ENCODE measurements at regions of chr1 and their contacts with region 1.

Region 1: DNA sequence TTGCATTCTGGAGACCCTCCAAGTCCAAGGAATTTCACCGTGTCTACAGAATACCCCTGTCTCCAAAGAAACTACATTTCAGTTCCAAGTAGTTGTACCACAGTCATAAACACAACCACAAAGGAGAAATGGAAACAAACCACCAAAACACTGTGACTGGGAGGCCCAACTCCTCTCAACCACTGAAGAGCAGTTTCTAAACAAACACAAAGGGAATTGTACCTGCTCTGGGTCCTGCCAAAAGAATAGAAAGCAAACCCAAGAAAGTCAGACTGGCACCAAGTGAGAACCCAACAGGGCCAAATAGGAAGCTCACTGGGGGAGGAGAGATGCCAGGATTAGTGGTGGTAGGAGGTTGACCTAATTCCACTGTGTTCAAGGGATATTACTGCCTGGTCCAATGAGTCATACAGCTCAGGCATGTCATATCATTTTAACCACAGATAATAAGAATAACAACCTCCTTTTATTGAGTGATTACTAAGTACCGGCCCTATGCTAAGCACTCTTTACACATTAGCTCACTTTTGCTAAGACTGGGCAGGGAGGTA is 123.9 kb upstream of the PPP2R5A start:
- DNase-seq: no peak
- ATAC-seq: peak; percentile 85 to 94 (median 86)
- H3K4me3 ChIP-seq: no peak overlapping the region
- H3K27ac ChIP-seq: peak overlapping the region; percentile 80
- H3K4me1 ChIP-seq: peaks cover 28% of the 10 kb centered on the region
- H3K27me3 ChIP-seq: no peaks in the 10 kb centered on the region
- CTCF ChIP-seq: no peak

Region 2: GRCh38 chr1:212089560-212090163 is 71.6 kb before region 1 on chr1:
- intact Hi-C with region 1: loop called in 1 of 2 experiments (anchors 10 kb)
- DNase-seq: no peak
- ATAC-seq: no peak
- H3K4me3 ChIP-seq: no peak overlapping the region
- H3K27ac ChIP-seq: no peak overlapping the region
- H3K4me1 ChIP-seq: no peaks in the 10 kb centered on the region
- H3K27me3 ChIP-seq: no peaks in the 10 kb centered on the region
- CTCF ChIP-seq: no peak

Region 3: DNA sequence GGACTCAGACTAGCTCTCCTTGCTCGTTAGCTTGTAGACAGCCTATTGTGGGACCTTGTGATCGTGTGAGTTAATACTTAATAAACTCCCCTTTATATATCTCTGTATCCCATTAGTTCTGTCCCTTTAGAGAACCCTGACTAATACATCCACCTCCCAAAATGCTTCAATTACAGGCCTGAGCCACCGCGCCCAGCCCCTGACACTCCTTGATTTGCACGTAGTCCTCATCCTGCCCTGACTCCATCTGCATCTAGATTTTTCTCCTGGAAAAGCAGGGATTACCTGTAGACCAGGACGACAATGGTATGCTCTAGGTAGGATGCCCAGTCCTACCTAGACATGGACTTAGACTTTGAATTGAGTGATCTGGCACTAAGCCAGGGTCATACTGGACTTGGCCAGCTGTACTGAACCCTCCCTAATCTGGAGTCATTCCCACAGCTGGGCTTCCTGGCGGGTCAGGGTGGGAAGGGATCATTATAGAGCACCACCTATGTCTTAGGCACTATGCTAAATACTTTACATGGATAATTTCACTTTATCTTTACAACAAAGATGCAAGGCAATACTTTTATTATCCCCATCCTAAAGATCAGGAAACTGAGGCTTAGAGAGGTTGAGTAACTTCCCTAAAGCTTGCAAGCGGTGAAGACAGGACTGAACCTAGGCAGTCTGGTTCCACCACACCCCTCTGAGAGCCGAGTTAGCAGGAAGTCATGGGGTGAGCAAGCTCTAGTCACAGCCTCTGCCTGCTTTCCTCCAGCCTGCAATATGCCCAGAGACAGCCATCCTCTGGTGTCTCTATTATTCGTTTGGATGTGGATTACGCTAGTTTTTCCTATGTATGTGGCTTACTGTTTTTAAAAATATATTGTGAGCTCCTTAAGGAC is 36.4 kb before region 1 on chr1:
- intact Hi-C with region 1: loop called in 1 of 2 experiments (anchors 2 kb)
- DNase-seq: no peak
- ATAC-seq: no peak
- H3K4me3 ChIP-seq: no peak overlapping the region
- H3K27ac ChIP-seq: no peak overlapping the region
- H3K4me1 ChIP-seq: peaks cover 11% of the 10 kb centered on the region
- H3K27me3 ChIP-seq: no peaks in the 10 kb centered on the region
- CTCF ChIP-seq: no peak

Region 4: GRCh38 chr1:212256369-212256768 is 95.1 kb after region 1 on chr1:
- intact Hi-C with region 1: no loop called
- DNase-seq: no peak
- ATAC-seq: peak in 1 of 4 donors; percentile 42
- H3K4me3 ChIP-seq: no peak overlapping the region
- H3K27ac ChIP-seq: no peak overlapping the region
- H3K4me1 ChIP-seq: no peaks in the 10 kb centered on the region
- H3K27me3 ChIP-seq: no peaks in the 10 kb centered on the region
- CTCF ChIP-seq: no peak

Measured in psoas muscle (tissue), 8 donors.